CD8-positive, alpha-beta memory T cell (primary cell): ENCODE measurements at regions of chr1 and their contacts with region 1.

Region 1: DNA sequence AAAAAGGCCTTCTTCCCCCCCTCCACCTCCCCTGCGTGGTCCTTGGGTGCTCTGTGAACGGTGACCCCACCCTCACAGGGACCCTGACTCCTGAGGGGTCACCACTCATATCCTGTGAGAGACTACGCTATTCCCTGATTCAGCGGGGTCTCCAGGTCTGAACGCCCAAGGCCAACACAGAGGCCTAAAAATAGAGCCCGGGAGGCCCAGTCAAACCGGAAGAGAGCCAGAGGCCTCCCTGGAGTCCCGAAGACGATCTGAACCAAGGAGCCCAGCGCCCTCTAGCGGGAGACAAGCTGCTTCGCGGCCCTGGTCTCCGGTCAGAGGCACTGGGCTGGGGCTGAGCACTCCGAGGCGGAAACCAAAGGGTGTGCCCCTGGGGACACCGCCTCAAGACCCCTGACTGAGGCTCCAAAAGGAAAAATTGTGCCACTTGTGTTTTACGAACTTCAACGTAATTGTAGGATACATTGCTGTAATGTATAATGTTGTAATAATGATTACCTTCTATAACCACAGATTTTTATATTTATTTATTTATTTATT is 42.4 kb upstream of the PSEN2 start:
- DNase-seq: peak; percentile 87 to 96 (median 92)
- H3K4me3 ChIP-seq: peak overlapping the region; percentile 20
- H3K4me3 Mint-ChIP-seq: peak overlapping the region in 6 of 7 donors; percentile 29 to 81 (median 64)
- H3K27ac ChIP-seq: peak overlapping the region; percentile 59
- H3K27ac Mint-ChIP-seq: peak overlapping the region in 6 of 8 donors; percentile 41 to 93 (median 88)
- H3K4me1 ChIP-seq: peaks cover 11% of the 10 kb centered on the region
- H3K4me1 Mint-ChIP-seq: peaks cover 14 to 16% (median 15%) of the 10 kb centered on the region in 3 donors
- H3K27me3 ChIP-seq: no peaks in the 10 kb centered on the region
- H3K27me3 Mint-ChIP-seq: peaks cover 0 to 5% of the 10 kb centered on the region in 2 donors

Region 2: GRCh38 chr1:226642876-226643576 is 185.0 kb before region 1 on chr1:
- CTCF ChIA-PET with region 1: interaction called, 23 read pairs
- POLR2A ChIA-PET with region 1: no interaction called
- DNase-seq: peak in 1 of 5 donors; percentile 62
- H3K4me3 ChIP-seq: no peak overlapping the region
- H3K4me3 Mint-ChIP-seq: peak overlapping the region in 5 of 7 donors; percentile 24 to 76 (median 59)
- H3K27ac ChIP-seq: no peak overlapping the region
- H3K27ac Mint-ChIP-seq: peak overlapping the region; percentile 67 to 93 (median 90)
- H3K4me1 ChIP-seq: peaks cover 54% of the 10 kb centered on the region
- H3K4me1 Mint-ChIP-seq: peaks cover 9 to 40% (median 40%) of the 10 kb centered on the region in 3 donors
- H3K27me3 ChIP-seq: no peaks in the 10 kb centered on the region
- H3K27me3 Mint-ChIP-seq: no peaks in the 10 kb centered on the region

Region 3: GRCh38 chr1:226838456-226838855 is 10.4 kb after region 1 on chr1:
- CTCF ChIA-PET with region 1: no interaction called
- POLR2A ChIA-PET with region 1: no interaction called
- DNase-seq: no peak
- H3K4me3 ChIP-seq: no peak overlapping the region
- H3K4me3 Mint-ChIP-seq: no peak overlapping the region
- H3K27ac ChIP-seq: no peak overlapping the region
- H3K27ac Mint-ChIP-seq: no peak overlapping the region
- H3K4me1 ChIP-seq: no peaks in the 10 kb centered on the region
- H3K4me1 Mint-ChIP-seq: no peaks in the 10 kb centered on the region
- H3K27me3 ChIP-seq: no peaks in the 10 kb centered on the region
- H3K27me3 Mint-ChIP-seq: peaks cover 8 to 12% of the 10 kb centered on the region in 2 donors